SK-N-SH (cell line): ENCODE measurements at regions of chr3 and their contacts with region 1.

Region 1: GRCh38 chr3:124761250-124761796 is 31.1 kb downstream of the UMPS start:
- DNase-seq: peak; percentile 77
- H3K4me3 ChIP-seq: no peak overlapping the region
- H3K27ac ChIP-seq: peak overlapping the region; percentile 4 to 74; a peak in 2 of 4 replicates
- H3K4me1 ChIP-seq: peaks cover 9 to 47% of the 10 kb centered on the region in 2 experiments; a peak in 3 of 4 replicates
- H3K27me3 ChIP-seq: no peaks in the 10 kb centered on the region
- CTCF ChIP-seq: peak; percentile 98
- EP300 ChIP-seq: no peak
- RAD21 ChIP-seq: peak; percentile 96

Region 2: GRCh38 chr3:124584552-124585391 is 176.6 kb before region 1 on chr3:
- CTCF ChIA-PET with region 1: no interaction called
- POLR2A ChIA-PET with region 1: no interaction called
- DNase-seq: peak; percentile 91
- H3K4me3 ChIP-seq: peak overlapping the region; percentile 55 to 68
- H3K27ac ChIP-seq: no peak overlapping the region
- H3K4me1 ChIP-seq: peaks cover 0 to 25% of the 10 kb centered on the region in 2 experiments; a peak in 2 of 4 replicates
- H3K27me3 ChIP-seq: no peaks in the 10 kb centered on the region
- CTCF ChIP-seq: no peak
- EP300 ChIP-seq: no peak
- RAD21 ChIP-seq: no peak

Region 3: DNA sequence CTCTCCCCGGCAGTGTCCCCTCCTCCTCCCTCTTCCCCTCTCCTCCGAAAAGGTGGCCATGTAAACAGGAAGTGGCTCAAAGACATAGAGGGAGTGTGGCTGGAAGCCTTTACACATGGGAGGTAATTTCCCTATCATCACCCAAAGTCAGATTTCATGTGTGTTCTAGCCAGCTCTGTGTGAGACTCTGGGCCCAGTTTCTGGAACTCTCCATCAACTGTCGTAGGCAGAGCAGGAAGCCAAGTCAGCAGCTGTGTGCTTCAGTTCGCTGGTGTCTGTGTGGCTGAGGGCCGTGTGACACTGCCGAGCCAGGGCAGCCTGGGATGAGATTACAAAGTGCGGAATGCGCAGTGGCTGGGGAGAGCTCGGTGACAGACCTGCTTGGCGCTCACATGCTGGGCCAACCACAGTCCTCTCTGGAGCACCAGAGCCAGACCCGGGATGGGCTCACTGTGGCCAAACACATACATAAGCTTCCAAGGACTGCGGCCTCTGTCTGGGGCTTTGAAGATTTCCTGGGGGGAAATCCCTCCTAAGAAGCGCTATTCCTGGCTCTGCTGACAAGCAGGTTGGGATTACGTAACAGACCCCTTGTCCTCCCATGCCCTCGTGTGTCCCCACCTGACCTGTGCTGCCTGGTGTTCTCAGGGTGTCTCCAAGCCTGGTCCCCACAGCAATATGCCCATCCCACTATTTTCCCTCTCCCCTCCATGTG is 19.6 kb after region 1 on chr3:
- CTCF ChIA-PET with region 1: interaction called, 40 read pairs
- POLR2A ChIA-PET with region 1: no interaction called
- DNase-seq: peak; percentile 41
- H3K4me3 ChIP-seq: no peak overlapping the region
- H3K27ac ChIP-seq: peak overlapping the region; percentile 14 to 59; a peak in 3 of 4 replicates
- H3K4me1 ChIP-seq: peaks cover 20 to 65% of the 10 kb centered on the region in 2 experiments; a peak in 3 of 4 replicates
- H3K27me3 ChIP-seq: no peaks in the 10 kb centered on the region
- CTCF ChIP-seq: no peak
- EP300 ChIP-seq: no peak
- RAD21 ChIP-seq: no peak

Region 4: DNA sequence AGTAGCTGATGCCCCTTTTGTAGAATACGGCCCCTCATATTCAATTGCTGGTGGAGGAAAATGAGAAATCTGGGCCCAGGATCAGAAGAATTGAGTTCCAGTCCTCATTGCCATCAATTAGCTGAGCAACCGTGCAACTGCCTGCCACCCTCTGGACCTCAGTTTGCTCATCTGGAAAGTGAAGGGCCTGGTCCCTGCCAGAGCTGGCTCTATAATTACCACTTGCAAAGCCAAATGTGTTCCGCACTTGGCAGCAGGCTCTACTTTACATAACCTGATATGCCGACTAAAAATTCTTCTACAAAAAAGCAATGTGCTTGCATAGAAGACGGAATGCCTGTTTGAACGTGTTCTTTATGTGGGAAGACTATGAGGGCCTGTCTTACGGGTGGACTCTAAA is 134.4 kb after region 1 on chr3:
- CTCF ChIA-PET with region 1: interaction called, 332 read pairs
- POLR2A ChIA-PET with region 1: interaction called, 4 read pairs
- DNase-seq: no peak
- H3K4me3 ChIP-seq: no peak overlapping the region
- H3K27ac ChIP-seq: no peak overlapping the region
- H3K4me1 ChIP-seq: peaks cover 0 to 9% of the 10 kb centered on the region in 2 experiments; a peak in 2 of 4 replicates
- H3K27me3 ChIP-seq: no peaks in the 10 kb centered on the region
- CTCF ChIP-seq: no peak
- EP300 ChIP-seq: no peak
- RAD21 ChIP-seq: no peak

Region 5: GRCh38 chr3:124928333-124929202 is 167.2 kb after region 1 on chr3:
- CTCF ChIA-PET with region 1: interaction called, 17 read pairs
- POLR2A ChIA-PET with region 1: no interaction called
- DNase-seq: peak; percentile 39
- H3K4me3 ChIP-seq: peak overlapping the region in 1 of 2 experiments; percentile 48; a peak in 1 of 4 replicates
- H3K27ac ChIP-seq: no peak overlapping the region
- H3K4me1 ChIP-seq: no peaks in the 10 kb centered on the region; a peak in 1 of 4 replicates
- H3K27me3 ChIP-seq: no peaks in the 10 kb centered on the region
- CTCF ChIP-seq: peak; percentile 90
- EP300 ChIP-seq: no peak
- RAD21 ChIP-seq: peak; percentile 80

Region 6: DNA sequence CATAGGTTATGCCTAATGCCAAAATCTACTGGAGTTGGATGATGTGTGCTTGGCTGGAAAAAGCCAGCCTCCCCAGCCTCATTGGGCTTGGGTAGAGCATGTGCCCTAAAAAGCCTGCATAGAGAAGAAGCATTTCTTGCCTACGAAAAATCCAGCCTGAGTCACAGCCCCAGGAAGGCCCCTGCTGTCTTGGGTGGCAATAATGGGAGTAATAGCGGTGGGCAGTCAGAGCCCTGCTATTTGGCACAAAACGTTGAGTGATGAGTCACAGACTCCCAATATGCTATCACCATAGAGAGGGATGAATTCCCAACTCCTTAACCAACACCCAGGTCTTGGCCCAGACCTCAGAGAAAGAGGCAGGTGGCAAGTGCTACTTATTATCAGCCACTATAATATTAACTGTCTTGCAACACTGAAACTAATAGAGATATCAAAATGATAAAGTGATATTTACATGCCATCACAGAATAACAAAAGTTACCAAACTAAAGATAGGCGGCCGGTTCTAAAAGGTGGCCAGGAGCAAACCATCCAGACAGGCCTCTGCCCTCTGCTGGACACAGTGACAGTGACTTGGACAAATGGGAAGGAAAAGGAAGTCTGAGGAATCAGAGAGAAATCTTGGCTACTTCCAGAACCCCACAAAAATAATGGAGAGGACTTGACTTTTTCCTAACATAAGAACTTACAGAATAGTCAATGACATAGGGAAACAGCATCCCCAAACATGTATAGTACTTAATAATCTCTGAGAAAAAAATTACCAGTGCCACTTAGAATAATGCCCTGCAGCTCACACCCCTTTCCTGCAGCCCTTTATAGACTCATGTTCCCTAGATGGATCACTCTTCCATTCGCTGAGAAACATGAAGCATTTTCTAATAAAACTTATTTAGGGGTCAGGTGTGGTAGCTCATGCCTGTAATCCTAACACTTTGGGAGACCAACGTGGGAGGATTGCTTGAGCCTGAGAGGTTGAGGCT is 225.1 kb after region 1 on chr3:
- CTCF ChIA-PET with region 1: interaction called, 41 read pairs
- POLR2A ChIA-PET with region 1: no interaction called
- DNase-seq: peak; percentile 45
- H3K4me3 ChIP-seq: peak overlapping the region in 1 of 2 experiments; percentile 31; a peak in 1 of 4 replicates
- H3K27ac ChIP-seq: peak overlapping the region; percentile 56 to 98
- H3K4me1 ChIP-seq: peaks cover 5 to 21% of the 10 kb centered on the region in 2 experiments; a peak in 3 of 4 replicates
- H3K27me3 ChIP-seq: no peaks in the 10 kb centered on the region
- CTCF ChIP-seq: peak; percentile 79
- EP300 ChIP-seq: peak in 1 of 2 experiments; percentile 87; a peak in 1 of 4 replicates
- RAD21 ChIP-seq: peak; percentile 71